T-cell (primary cell): ENCODE measurements at regions of chr3 and their contacts with region 1.

Region 1: GRCh38 chr3:88113311-88114162 is 36.2 kb upstream of the C3orf38 start:
- DNase-seq: peak in 31 of 35 experiments; percentile 6 to 83 (median 44)
- ATAC-seq: peak; percentile 69 to 88 (median 81)
- H3K4me3 ChIP-seq: no peak overlapping the region
- H3K4me3 Mint-ChIP-seq: no peak overlapping the region
- H3K27ac ChIP-seq: no peak overlapping the region
- H3K27ac Mint-ChIP-seq: peak overlapping the region in 1 of 2 donors; percentile 34
- H3K4me1 ChIP-seq: no peaks in the 10 kb centered on the region
- H3K4me1 Mint-ChIP-seq: peaks cover 22 to 40% (median 30%) of the 10 kb centered on the region in 3 donors
- H3K27me3 ChIP-seq: no peaks in the 10 kb centered on the region
- H3K27me3 Mint-ChIP-seq: no peaks in the 10 kb centered on the region

Region 2: GRCh38 chr3:87298111-87298718 is 815.3 kb before region 1 on chr3:
- CTCF ChIA-PET with region 1: interaction called, 5 to 12 read pairs
- POLR2A ChIA-PET with region 1: no interaction called
- DNase-seq: peak in 1 of 35 experiments; percentile 50
- ATAC-seq: peak; percentile 42 to 60 (median 58)
- H3K4me3 ChIP-seq: no peak overlapping the region
- H3K4me3 Mint-ChIP-seq: no peak overlapping the region
- H3K27ac ChIP-seq: no peak overlapping the region
- H3K27ac Mint-ChIP-seq: no peak overlapping the region
- H3K4me1 ChIP-seq: no peaks in the 10 kb centered on the region
- H3K4me1 Mint-ChIP-seq: peaks cover 0 to 2% (median 0%) of the 10 kb centered on the region in 3 donors
- H3K27me3 ChIP-seq: no peaks in the 10 kb centered on the region
- H3K27me3 Mint-ChIP-seq: no peaks in the 10 kb centered on the region

Region 3: DNA sequence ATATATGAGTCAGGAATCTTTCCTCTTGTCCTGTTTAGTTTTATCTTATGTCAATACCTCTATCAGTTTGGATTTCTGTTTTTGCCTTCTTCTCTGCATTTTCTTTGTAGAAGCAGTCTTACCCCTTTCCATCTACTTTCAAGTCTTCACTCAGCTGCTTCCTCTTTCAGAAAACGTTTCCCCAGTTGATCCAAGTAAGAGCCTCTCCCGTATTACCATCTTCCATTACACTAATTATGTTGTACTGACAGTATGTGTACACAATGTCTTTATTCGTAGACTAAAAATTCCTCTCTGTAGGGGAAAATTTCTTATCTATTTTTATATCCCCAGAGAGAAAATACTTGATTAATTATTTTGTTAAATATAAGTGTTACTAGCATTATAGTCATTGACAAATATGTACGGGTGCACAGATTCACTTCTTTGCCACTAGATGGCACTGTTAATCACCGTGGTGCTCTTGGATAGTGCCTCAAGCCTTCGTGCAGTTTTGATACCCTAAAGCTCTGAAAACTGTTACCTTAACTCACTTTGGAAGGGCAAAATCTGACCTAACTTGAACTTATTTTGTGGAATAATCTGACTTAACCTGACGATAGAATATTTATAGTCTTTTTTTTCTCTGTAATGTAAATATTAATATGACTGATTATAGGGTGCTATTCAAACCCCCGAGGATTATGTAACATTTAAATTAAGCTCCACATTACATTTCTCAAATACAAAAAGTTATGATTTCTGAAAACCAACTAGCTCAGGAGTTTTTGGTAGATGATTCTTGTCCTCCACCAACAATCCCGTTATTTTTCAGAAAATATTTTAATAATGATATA is 763.0 kb before region 1 on chr3:
- CTCF ChIA-PET with region 1: interaction called, 8 to 30 read pairs
- POLR2A ChIA-PET with region 1: no interaction called
- DNase-seq: peak in 9 of 35 experiments; percentile 1 to 68 (median 5)
- ATAC-seq: peak; percentile 77 to 83 (median 80)
- H3K4me3 ChIP-seq: no peak overlapping the region
- H3K4me3 Mint-ChIP-seq: no peak overlapping the region
- H3K27ac ChIP-seq: no peak overlapping the region
- H3K27ac Mint-ChIP-seq: no peak overlapping the region
- H3K4me1 ChIP-seq: no peaks in the 10 kb centered on the region
- H3K4me1 Mint-ChIP-seq: no peaks in the 10 kb centered on the region
- H3K27me3 ChIP-seq: peaks cover 0 to 4% of the 10 kb centered on the region in 2 experiments
- H3K27me3 Mint-ChIP-seq: peaks cover 6 to 7% of the 10 kb centered on the region in 2 donors

Region 4: DNA sequence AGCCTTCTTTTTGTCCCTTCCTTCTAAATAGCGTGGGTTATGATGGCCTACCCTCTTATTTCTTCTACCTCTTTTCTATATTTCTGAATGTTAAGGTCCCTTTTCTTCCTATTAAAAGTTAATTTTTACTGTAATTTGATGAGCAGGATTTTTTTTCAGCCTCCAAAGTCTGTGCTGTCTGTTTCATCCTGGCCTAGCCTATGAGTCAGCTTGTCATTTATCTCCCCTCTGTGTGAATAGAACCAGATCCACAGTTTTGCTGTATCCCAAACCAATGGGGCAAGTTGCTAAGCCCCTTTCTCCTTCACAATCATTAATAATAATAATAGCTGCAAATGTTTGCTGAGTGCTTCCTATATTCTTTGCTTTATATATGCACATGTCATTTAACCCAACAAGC is 18.2 kb after region 1 on chr3:
- CTCF ChIA-PET with region 1: interaction called, 3 to 10 read pairs
- POLR2A ChIA-PET with region 1: interaction called in 1 of 2 experiments, 6 read pairs
- DNase-seq: no peak
- ATAC-seq: no peak
- H3K4me3 ChIP-seq: no peak overlapping the region
- H3K4me3 Mint-ChIP-seq: no peak overlapping the region
- H3K27ac ChIP-seq: no peak overlapping the region
- H3K27ac Mint-ChIP-seq: no peak overlapping the region
- H3K4me1 ChIP-seq: no peaks in the 10 kb centered on the region
- H3K4me1 Mint-ChIP-seq: peaks cover 0 to 2% (median 0%) of the 10 kb centered on the region in 3 donors
- H3K27me3 ChIP-seq: no peaks in the 10 kb centered on the region
- H3K27me3 Mint-ChIP-seq: no peaks in the 10 kb centered on the region

Region 5: DNA sequence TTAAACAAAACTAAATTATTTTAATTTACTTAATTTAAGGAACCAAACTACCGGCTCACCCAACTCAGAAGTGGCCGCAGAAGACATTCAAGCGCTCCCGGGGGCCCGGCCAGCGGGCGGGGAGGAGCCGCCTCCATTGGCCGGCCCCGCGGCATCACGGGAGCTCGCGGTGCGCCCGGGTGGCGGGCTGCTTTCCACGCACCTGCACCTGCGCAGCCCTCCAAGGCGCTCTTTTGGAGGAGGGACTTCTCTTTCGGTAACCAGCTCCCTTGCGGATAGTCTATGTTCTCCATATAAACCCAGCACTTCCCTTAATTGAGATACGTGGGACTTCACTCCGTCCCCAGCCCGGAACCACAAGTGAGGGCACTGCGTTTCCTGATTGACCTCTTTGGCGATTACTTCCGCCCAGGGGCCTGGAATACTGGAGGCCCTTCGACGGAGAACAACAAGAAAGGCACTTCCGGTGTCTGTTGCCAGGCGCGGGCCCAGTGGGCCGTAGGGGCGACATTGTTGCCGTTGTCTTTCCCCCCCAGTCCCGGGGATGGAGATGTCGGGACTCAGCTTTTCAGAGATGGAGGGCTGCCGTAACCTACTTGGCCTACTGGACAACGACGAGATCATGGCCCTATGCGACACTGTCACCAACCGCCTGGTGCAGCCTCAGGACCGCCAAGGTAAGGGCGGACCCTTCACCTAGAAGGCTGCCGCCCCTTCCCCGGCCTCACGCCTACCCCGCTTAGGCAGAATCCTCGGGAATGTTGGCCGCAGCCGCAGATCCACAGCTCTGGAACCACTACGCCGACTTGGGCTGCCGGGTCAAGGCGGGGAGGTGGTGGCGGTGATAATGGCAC is 36.2 kb after region 1 on chr3 and contains the start of gene C3orf38:
- CTCF ChIA-PET with region 1: interaction called, 5 to 13 read pairs
- POLR2A ChIA-PET with region 1: interaction called in 1 of 2 experiments, 5 read pairs
- DNase-seq: peak; percentile 64 to 85 (median 76)
- ATAC-seq: peak; percentile 94 to 97 (median 96)
- H3K4me3 ChIP-seq: peak within 1 kb of the TSS; percentile 86 to 98
- H3K4me3 Mint-ChIP-seq: peak within 1 kb of the TSS; percentile 95 to 97 (median 96)
- H3K27ac ChIP-seq: peak within 1 kb of the TSS; percentile 94
- H3K27ac Mint-ChIP-seq: peak within 1 kb of the TSS; percentile 99
- H3K4me1 ChIP-seq: peaks cover 15 to 19% of the 10 kb centered on the region in 2 experiments
- H3K4me1 Mint-ChIP-seq: peaks cover 37 to 46% (median 45%) of the 10 kb centered on the region in 3 donors
- H3K27me3 ChIP-seq: no peaks in the 10 kb centered on the region
- H3K27me3 Mint-ChIP-seq: no peaks in the 10 kb centered on the region
- total RNA-seq, gene C3orf38: 26.0 to 39.3 (median 26.8) TPM